Activated CD4-positive, alpha-beta T cell treated with anti-CD3 and anti-CD28 coated beads, Interleukin-2, amount 10 ng/mL, durations not matched to agents 24 days and 14 days (primary cell): ENCODE measurements at regions of chr1 and their contacts with region 1.

Region 1: GRCh38 chr1:42924082-42924850 is 34.4 kb downstream of the SLC2A1 start:
- DNase-seq: peak; percentile 98
- H3K4me3 Mint-ChIP-seq: peak overlapping the region; percentile 84
- H3K27ac Mint-ChIP-seq: peak overlapping the region; percentile 91
- H3K4me1 Mint-ChIP-seq: peaks cover 44% of the 10 kb centered on the region
- H3K27me3 Mint-ChIP-seq: no peaks in the 10 kb centered on the region

Region 2: GRCh38 chr1:41868599-41868998 is 1055.7 kb before region 1 on chr1:
- intact Hi-C with region 1: no loop called
- DNase-seq: peak; percentile 84
- H3K4me3 Mint-ChIP-seq: peak overlapping the region; percentile 35
- H3K27ac Mint-ChIP-seq: peak overlapping the region; percentile 81
- H3K4me1 Mint-ChIP-seq: peaks cover 34% of the 10 kb centered on the region
- H3K27me3 Mint-ChIP-seq: no peaks in the 10 kb centered on the region

Region 3: GRCh38 chr1:42456010-42456758 is 468.1 kb before region 1 on chr1 and contains the starts of genes PPCS and ZMYND12:
- intact Hi-C with region 1: loop called (anchors 10 kb)
- DNase-seq: peak; percentile 97
- H3K4me3 Mint-ChIP-seq: peak within 1 kb of the TSS; percentile 93
- H3K27ac Mint-ChIP-seq: peak within 1 kb of the TSS; percentile 98
- H3K4me1 Mint-ChIP-seq: peaks cover 23% of the 10 kb centered on the region
- H3K27me3 Mint-ChIP-seq: peaks cover 3% of the 10 kb centered on the region
- total RNA-seq, gene PPCS: 44.7 and 48.0 TPM in 2 replicates
- total RNA-seq, gene ZMYND12: 0.12 TPM in 1 of 2 replicates, not detected in the other

Region 4: DNA sequence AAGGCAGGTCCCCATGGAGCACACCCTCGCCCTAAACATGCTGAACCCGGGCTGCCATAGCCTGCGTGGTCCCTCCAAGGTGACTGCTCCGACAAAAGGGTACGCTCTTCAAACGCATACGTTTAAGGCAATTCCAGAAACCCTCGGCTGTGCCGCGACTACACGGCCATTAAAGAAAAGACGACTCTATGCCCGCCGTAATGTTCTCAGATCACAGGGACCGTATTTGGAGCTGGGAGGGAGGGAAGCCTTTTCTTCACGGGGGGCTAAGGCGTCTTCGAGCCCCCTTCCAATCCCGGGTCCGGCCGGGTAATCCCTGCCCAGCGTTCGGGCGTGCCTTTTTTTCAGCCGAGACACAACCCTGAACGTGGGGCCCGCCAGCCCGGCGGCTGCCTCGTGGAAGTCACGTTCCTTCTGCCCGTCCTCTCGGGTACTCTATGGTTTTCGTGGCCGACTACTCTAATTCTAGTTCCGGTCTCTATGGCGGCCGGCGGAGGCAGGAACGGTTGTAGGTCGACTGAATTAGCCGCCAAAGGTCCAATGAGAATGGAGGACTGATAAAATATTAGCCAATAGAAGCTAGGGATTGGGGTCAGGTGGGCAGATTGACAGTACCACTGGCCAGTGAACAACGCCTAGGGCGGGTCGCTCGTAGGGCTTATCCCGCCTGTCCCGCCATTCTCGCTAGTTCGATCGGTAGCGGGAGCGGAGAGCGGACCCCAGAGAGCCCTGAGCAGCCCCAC is 242.4 kb before region 1 on chr1 and contains the start of gene YBX1:
- intact Hi-C with region 1: loop called (anchors 10 kb)
- DNase-seq: peak; percentile 98
- H3K4me3 Mint-ChIP-seq: peak within 1 kb of the TSS; percentile 94
- H3K27ac Mint-ChIP-seq: peak within 1 kb of the TSS; percentile 98
- H3K4me1 Mint-ChIP-seq: peaks cover 50% of the 10 kb centered on the region
- H3K27me3 Mint-ChIP-seq: no peaks in the 10 kb centered on the region
- total RNA-seq, gene YBX1: 861 and 867 TPM in 2 replicates

Region 5: DNA sequence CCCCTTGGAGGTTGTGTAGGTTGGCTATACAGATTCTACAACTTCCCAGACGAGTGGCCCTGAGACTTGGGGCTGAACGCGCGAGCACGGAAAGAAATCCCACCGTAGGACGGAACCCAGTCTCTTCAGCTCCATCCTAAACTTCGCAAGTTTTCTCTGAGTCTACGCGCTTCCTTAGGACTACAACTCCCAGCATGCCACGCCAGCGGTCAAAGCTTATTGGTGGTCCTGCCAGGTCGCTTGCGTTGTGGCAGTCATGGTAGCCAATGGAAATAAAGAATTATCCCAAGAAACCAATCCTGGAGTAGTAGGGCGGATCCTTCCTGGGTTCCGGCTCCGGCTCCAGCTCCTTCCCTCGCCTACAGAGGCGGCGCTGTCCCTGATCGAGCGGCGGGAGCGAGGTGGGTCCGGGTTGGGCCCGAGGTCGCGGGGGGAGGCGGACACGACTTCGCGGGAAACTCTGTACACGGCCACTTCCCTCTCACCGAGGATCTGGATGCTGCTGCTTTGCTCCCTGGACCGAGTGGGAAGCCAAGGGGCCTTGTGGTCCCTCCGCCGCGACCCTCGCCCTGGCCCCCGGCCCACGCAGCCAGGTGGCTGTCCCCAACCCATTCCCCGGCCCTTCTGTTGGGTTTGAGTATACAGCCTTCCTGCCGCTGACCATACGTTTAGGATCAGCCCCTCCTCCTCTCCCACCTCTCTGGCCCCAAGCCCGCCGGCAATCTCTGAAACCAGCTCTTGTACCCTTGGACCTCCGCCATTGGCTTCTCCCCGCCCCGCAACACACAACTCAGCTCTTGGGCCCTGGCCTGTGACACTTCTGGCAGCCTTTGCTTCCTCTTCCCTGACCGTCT is 77.8 kb before region 1 on chr1 and contains the start of gene ZNF691:
- intact Hi-C with region 1: loop called (anchors 2 kb)
- DNase-seq: peak; percentile 96
- H3K4me3 Mint-ChIP-seq: peak within 1 kb of the TSS; percentile 96
- H3K27ac Mint-ChIP-seq: peak within 1 kb of the TSS; percentile 84
- H3K4me1 Mint-ChIP-seq: peaks cover 31% of the 10 kb centered on the region
- H3K27me3 Mint-ChIP-seq: no peaks in the 10 kb centered on the region
- total RNA-seq, gene ZNF691: 9.9 and 11.1 TPM in 2 replicates

Region 6: DNA sequence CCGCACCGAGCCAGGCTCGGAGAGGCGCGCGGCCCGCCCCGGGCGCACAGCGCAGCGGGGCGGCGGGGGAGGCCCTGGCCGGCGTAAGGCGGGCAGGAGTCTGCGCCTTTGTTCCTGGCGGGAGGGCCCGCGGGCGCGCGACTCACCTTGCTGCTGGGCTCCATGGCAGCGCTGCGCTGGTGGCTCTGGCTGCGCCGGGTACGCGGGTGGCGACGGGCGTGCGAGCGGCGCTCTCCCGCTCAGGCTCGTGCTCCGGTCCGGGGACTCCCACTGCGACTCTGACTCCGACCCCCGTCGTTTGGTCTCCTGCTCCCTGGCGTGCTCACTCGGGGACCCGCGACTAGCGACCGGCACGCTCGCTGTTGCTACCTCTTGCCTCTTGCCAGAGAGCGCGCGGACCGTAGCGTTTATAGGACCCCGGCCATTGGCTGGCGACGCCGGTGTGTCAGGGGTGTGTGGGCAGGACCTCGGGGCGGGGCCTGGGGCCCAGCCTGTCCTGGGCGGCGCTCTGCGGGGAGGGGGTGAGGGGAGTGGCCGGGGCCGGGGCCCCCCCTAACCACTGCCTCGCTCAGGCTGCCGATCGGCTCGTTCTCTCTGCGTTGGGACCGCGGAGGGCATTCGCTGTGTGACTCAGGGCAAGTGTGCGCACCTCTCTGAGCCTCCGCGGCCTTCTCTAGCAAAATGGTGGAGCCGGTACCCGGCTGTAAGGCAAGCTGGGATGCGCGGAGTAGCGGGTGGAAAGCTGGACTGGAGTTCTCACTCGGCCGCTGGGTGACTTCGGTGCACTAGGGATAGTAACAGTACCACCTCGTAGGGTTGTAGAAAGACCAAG is 34.4 kb after region 1 on chr1 and contains the start of gene SLC2A1:
- intact Hi-C with region 1: loop called (anchors 1 kb)
- DNase-seq: peak; percentile 98
- H3K4me3 Mint-ChIP-seq: peak within 1 kb of the TSS; percentile 97
- H3K27ac Mint-ChIP-seq: peak within 1 kb of the TSS; percentile 100
- H3K4me1 Mint-ChIP-seq: peaks cover 58% of the 10 kb centered on the region
- H3K27me3 Mint-ChIP-seq: peaks cover 6% of the 10 kb centered on the region
- total RNA-seq, gene SLC2A1: 135 and 144 TPM in 2 replicates

Region 7: GRCh38 chr1:43058545-43059355 is 134.5 kb after region 1 on chr1:
- intact Hi-C with region 1: no loop called
- DNase-seq: peak; percentile 76
- H3K4me3 Mint-ChIP-seq: peak overlapping the region; percentile 42
- H3K27ac Mint-ChIP-seq: peak overlapping the region; percentile 72
- H3K4me1 Mint-ChIP-seq: peaks cover 23% of the 10 kb centered on the region
- H3K27me3 Mint-ChIP-seq: no peaks in the 10 kb centered on the region

Region 8: GRCh38 chr1:43171876-43172526 is 247.7 kb after region 1 on chr1 and contains the starts of genes CFAP57 and EBNA1BP2:
- intact Hi-C with region 1: loop called (anchors 1 kb)
- DNase-seq: peak; percentile 98
- H3K4me3 Mint-ChIP-seq: peak within 1 kb of the TSS; percentile 97
- H3K27ac Mint-ChIP-seq: peak within 1 kb of the TSS; percentile 97
- H3K4me1 Mint-ChIP-seq: peaks cover 26% of the 10 kb centered on the region
- H3K27me3 Mint-ChIP-seq: peaks cover 22% of the 10 kb centered on the region
- total RNA-seq, gene CFAP57: 0.40 TPM in 1 of 2 replicates, not detected in the other
- total RNA-seq, gene EBNA1BP2: 134 and 135 TPM in 2 replicates